Naive thymus-derived CD4-positive, alpha-beta T cell (primary cell): ENCODE measurements at regions of chr2 and their contacts with region 1.

Region 1: GRCh38 chr2:55282110-55282917 is 13.3 kb upstream of the MTIF2 start:
- DNase-seq: peak; percentile 78 to 87 (median 83)
- ATAC-seq: peak; percentile 99
- H3K4me3 ChIP-seq: peak overlapping the region; percentile 80
- H3K4me3 Mint-ChIP-seq: peak overlapping the region; percentile 87 to 97 (median 92)
- H3K27ac ChIP-seq: peak overlapping the region; percentile 93
- H3K27ac Mint-ChIP-seq: peak overlapping the region; percentile 94 to 99 (median 98)
- H3K4me1 ChIP-seq: peaks cover 0 to 4% of the 10 kb centered on the region in 2 donors
- H3K4me1 Mint-ChIP-seq: peaks cover 11 to 43% (median 29%) of the 10 kb centered on the region in 7 donors
- H3K27me3 ChIP-seq: no peaks in the 10 kb centered on the region
- H3K27me3 Mint-ChIP-seq: peaks cover 0 to 2% (median 0%) of the 10 kb centered on the region in 5 donors

Region 2: DNA sequence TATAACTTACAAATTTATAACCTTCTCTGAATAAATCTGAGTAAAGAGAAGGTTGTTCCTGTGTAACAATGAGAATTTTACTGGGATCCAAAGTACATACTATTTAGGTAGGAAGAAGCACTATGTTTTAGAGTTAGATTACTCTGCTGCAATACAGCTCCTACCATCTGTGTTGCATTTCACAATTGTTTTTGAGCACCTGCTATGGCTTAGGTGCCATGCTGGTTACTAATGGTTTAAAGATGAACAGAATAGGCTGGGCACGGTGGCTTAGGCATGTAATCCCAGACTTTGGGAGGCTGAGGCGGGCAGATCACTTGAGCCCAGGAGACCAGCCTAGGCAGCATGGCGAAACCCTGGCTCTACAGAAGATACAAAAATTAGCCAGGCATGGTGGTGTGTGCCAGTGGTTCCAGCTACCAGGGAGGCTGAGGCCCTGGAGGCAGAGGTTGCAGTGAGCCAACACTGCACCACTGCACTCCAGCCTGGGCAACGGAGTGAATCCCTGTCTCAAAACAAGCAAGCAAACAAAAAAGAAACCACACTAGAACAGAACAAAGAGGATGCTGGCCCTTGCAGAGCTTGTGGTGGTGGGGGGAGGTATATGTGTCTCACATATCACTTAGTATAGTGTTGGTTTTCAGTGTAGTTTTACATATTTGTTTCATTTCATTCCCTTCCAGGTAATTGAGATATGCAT is 769.5 kb before region 1 on chr2:
- CTCF ChIA-PET with region 1: no interaction called
- POLR2A ChIA-PET with region 1: no interaction called
- intact Hi-C with region 1: no loop called
- DNase-seq: no peak
- ATAC-seq: no peak
- H3K4me3 ChIP-seq: no peak overlapping the region
- H3K4me3 Mint-ChIP-seq: no peak overlapping the region
- H3K27ac ChIP-seq: no peak overlapping the region
- H3K27ac Mint-ChIP-seq: no peak overlapping the region
- H3K4me1 ChIP-seq: no peaks in the 10 kb centered on the region
- H3K4me1 Mint-ChIP-seq: peaks cover 0 to 6% (median 4%) of the 10 kb centered on the region in 7 donors
- H3K27me3 ChIP-seq: no peaks in the 10 kb centered on the region
- H3K27me3 Mint-ChIP-seq: peaks cover 0 to 15% (median 0%) of the 10 kb centered on the region in 5 donors

Region 3: DNA sequence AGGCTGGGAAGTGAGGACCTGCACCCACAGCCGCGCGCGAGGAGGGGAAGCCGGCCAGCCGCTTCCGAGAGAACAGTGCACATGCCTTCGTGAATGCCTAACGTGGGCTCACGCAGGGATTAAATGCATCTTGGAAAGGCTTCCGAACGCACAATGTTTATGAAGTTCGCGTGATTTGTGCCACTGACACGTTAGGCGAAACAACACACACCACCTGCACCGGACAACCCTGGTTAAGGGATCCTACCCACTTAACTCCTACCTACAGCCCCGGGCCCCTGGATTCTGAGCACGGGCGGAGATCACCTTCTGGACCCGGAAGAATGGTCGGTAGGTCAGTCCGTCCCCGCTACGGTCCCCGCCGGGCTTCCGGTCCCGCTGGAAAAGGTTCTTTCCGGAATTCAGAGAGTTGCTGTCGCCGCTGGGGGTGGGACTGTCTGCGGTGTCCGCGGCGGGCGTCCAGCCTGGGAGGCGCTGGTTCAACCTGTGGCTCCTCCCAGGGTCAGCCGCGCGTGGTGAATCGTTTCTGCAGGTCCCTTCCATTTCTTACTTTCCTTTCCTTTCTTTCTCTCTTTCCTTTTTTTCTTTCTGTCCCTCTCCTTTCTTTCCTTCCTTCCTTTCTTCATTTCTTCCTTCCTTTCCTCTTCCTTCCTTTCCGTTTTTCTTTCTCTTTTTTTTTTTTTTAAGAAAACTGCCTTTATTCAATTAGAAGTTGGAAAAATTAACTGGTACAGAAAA is 13.2 kb before region 1 on chr2 and contains the start of gene MTIF2:
- CTCF ChIA-PET with region 1: no interaction called
- POLR2A ChIA-PET with region 1: interaction called, 21 read pairs
- intact Hi-C with region 1: loop called (anchors 1 kb)
- DNase-seq: peak; percentile 64 to 90 (median 75)
- ATAC-seq: peak; percentile 97
- H3K4me3 ChIP-seq: peak within 1 kb of the TSS; percentile 84
- H3K4me3 Mint-ChIP-seq: peak within 1 kb of the TSS; percentile 78 to 97 (median 94)
- H3K27ac ChIP-seq: peak within 1 kb of the TSS; percentile 79
- H3K27ac Mint-ChIP-seq: peak within 1 kb of the TSS; percentile 94 to 97 (median 96)
- H3K4me1 ChIP-seq: peaks cover 13 to 16% of the 10 kb centered on the region in 2 donors
- H3K4me1 Mint-ChIP-seq: peaks cover 15 to 35% (median 27%) of the 10 kb centered on the region in 7 donors
- H3K27me3 ChIP-seq: no peaks in the 10 kb centered on the region
- H3K27me3 Mint-ChIP-seq: peaks cover 0 to 5% (median 0%) of the 10 kb centered on the region in 5 donors
- total RNA-seq, gene MTIF2: 23.0 to 35.5 (median 28.0) TPM

Region 4: GRCh38 chr2:55693181-55694134 is 411.1 kb after region 1 on chr2 and contains the start of gene PNPT1:
- CTCF ChIA-PET with region 1: no interaction called
- POLR2A ChIA-PET with region 1: no interaction called
- intact Hi-C with region 1: loop called in 1 of 2 experiments (anchors 5 kb)
- DNase-seq: peak; percentile 78 to 92 (median 90)
- ATAC-seq: peak; percentile 100
- H3K4me3 ChIP-seq: peak within 1 kb of the TSS; percentile 90
- H3K4me3 Mint-ChIP-seq: peak within 1 kb of the TSS; percentile 94 to 99 (median 97)
- H3K27ac ChIP-seq: peak within 1 kb of the TSS; percentile 72
- H3K27ac Mint-ChIP-seq: peak within 1 kb of the TSS; percentile 92 to 99 (median 96)
- H3K4me1 ChIP-seq: peaks cover 0 to 6% of the 10 kb centered on the region in 2 donors
- H3K4me1 Mint-ChIP-seq: peaks cover 18 to 50% (median 43%) of the 10 kb centered on the region in 7 donors
- H3K27me3 ChIP-seq: no peaks in the 10 kb centered on the region
- H3K27me3 Mint-ChIP-seq: peaks cover 0 to 6% (median 3%) of the 10 kb centered on the region in 5 donors
- total RNA-seq, gene PNPT1: 16.9 to 31.2 (median 18.5) TPM